Naive thymus-derived CD4-positive, alpha-beta T cell (primary cell): ENCODE measurements at regions of chr11 and their contacts with region 1.

Region 1: GRCh38 chr11:75248690-75249268 is 8.2 kb downstream of the TPBGL start:
- DNase-seq: peak; percentile 70 to 87 (median 82)
- ATAC-seq: peak; percentile 99
- H3K4me3 ChIP-seq: no peak overlapping the region
- H3K4me3 Mint-ChIP-seq: no peak overlapping the region
- H3K27ac ChIP-seq: no peak overlapping the region
- H3K27ac Mint-ChIP-seq: peak overlapping the region in 2 of 9 donors; percentile 18 to 20
- H3K4me1 ChIP-seq: no peaks in the 10 kb centered on the region
- H3K4me1 Mint-ChIP-seq: peaks cover 0 to 5% (median 4%) of the 10 kb centered on the region in 7 donors
- H3K27me3 ChIP-seq: no peaks in the 10 kb centered on the region
- H3K27me3 Mint-ChIP-seq: peaks cover 0 to 37% (median 10%) of the 10 kb centered on the region in 5 donors

Region 2: GRCh38 chr11:74702383-74703007 is 546.3 kb before region 1 on chr11:
- CTCF ChIA-PET with region 1: interaction called, 3 read pairs
- POLR2A ChIA-PET with region 1: no interaction called
- intact Hi-C with region 1: loop called in 1 of 2 experiments (anchors 1 kb)
- DNase-seq: peak; percentile 4 to 52 (median 41)
- ATAC-seq: peak; percentile 78
- H3K4me3 ChIP-seq: no peak overlapping the region
- H3K4me3 Mint-ChIP-seq: no peak overlapping the region
- H3K27ac ChIP-seq: no peak overlapping the region
- H3K27ac Mint-ChIP-seq: peak overlapping the region in 1 of 9 donors; percentile 22
- H3K4me1 ChIP-seq: no peaks in the 10 kb centered on the region
- H3K4me1 Mint-ChIP-seq: peaks cover 0 to 8% (median 0%) of the 10 kb centered on the region in 7 donors
- H3K27me3 ChIP-seq: no peaks in the 10 kb centered on the region
- H3K27me3 Mint-ChIP-seq: peaks cover 0 to 2% (median 2%) of the 10 kb centered on the region in 5 donors

Region 3: GRCh38 chr11:74929431-74930363 is 319.1 kb before region 1 on chr11:
- CTCF ChIA-PET with region 1: interaction called, 13 read pairs
- POLR2A ChIA-PET with region 1: no interaction called
- intact Hi-C with region 1: loop called (anchors 1 kb)
- DNase-seq: peak; percentile 9 to 74 (median 59)
- ATAC-seq: peak; percentile 92
- H3K4me3 ChIP-seq: no peak overlapping the region
- H3K4me3 Mint-ChIP-seq: no peak overlapping the region
- H3K27ac ChIP-seq: no peak overlapping the region
- H3K27ac Mint-ChIP-seq: no peak overlapping the region
- H3K4me1 ChIP-seq: no peaks in the 10 kb centered on the region
- H3K4me1 Mint-ChIP-seq: peaks cover 0 to 36% (median 0%) of the 10 kb centered on the region in 7 donors
- H3K27me3 ChIP-seq: no peaks in the 10 kb centered on the region
- H3K27me3 Mint-ChIP-seq: no peaks in the 10 kb centered on the region

Region 4: GRCh38 chr11:75022759-75023396 is 225.9 kb before region 1 on chr11:
- CTCF ChIA-PET with region 1: interaction called, 45 read pairs
- POLR2A ChIA-PET with region 1: no interaction called
- intact Hi-C with region 1: loop called (anchors 1 kb)
- DNase-seq: peak; percentile 38 to 71 (median 66)
- ATAC-seq: peak; percentile 88
- H3K4me3 ChIP-seq: no peak overlapping the region
- H3K4me3 Mint-ChIP-seq: no peak overlapping the region
- H3K27ac ChIP-seq: no peak overlapping the region
- H3K27ac Mint-ChIP-seq: no peak overlapping the region
- H3K4me1 ChIP-seq: no peaks in the 10 kb centered on the region
- H3K4me1 Mint-ChIP-seq: no peaks in the 10 kb centered on the region
- H3K27me3 ChIP-seq: no peaks in the 10 kb centered on the region
- H3K27me3 Mint-ChIP-seq: no peaks in the 10 kb centered on the region

Region 5: DNA sequence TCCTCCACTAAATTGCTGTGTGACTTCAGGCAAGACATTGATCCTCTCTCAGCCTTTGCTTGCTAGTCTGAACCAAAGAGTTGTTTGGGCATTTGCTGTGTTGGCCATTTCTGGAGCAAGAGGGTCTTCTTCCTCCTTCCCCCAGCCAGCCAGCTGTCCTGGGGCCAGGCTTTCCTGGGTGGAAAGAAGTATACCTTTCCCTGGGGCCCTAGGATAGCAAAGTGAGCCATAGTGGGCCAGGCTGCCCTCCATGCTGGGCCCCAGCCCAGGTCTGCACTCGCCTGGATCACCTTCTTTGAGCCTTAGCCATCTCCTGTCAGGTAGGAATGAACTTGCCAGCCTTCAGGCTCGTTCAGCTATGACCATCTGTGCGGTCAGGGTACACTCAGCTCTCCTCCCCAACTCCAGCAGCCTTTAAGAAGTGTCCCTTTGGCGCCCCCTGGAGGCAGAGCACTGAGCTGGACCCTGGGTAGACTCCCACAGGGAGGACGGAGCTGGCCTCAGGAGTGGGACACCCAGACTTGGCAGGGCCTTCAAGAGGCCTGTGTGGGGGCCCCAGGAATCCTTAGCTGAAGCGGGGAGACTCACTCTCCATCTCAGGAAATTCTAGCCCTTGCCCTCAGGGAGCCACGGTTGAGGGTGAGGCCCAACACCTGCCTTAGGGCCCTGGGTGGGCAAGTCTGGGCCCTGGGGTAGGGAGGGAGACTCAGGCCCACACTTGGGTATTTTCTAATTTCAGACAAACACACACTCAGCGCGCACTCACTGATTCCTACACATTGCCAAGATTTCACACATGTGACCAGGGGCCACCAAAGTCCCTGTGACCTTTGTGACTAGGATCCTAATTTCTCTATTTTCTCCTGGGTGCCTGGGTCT is 43.9 kb before region 1 on chr11:
- CTCF ChIA-PET with region 1: interaction called, 9 read pairs
- POLR2A ChIA-PET with region 1: no interaction called
- intact Hi-C with region 1: loop called in 1 of 2 experiments (anchors 2 kb)
- DNase-seq: peak; percentile 53 to 86 (median 64)
- ATAC-seq: peak; percentile 92
- H3K4me3 ChIP-seq: no peak overlapping the region
- H3K4me3 Mint-ChIP-seq: no peak overlapping the region
- H3K27ac ChIP-seq: no peak overlapping the region
- H3K27ac Mint-ChIP-seq: no peak overlapping the region
- H3K4me1 ChIP-seq: no peaks in the 10 kb centered on the region
- H3K4me1 Mint-ChIP-seq: peaks cover 0 to 2% (median 0%) of the 10 kb centered on the region in 7 donors
- H3K27me3 ChIP-seq: peaks cover 0 to 2% of the 10 kb centered on the region in 2 donors
- H3K27me3 Mint-ChIP-seq: peaks cover 0 to 9% (median 6%) of the 10 kb centered on the region in 5 donors

Region 6: GRCh38 chr11:75263944-75264349 is 15.2 kb after region 1 on chr11:
- CTCF ChIA-PET with region 1: interaction called, 45 read pairs
- POLR2A ChIA-PET with region 1: interaction called, 4 read pairs
- intact Hi-C with region 1: no loop called
- DNase-seq: no peak
- ATAC-seq: peak; percentile 35
- H3K4me3 ChIP-seq: no peak overlapping the region
- H3K4me3 Mint-ChIP-seq: peak overlapping the region in 6 of 10 donors; percentile 9 to 55 (median 20)
- H3K27ac ChIP-seq: peak overlapping the region; percentile 33
- H3K27ac Mint-ChIP-seq: peak overlapping the region; percentile 18 to 87 (median 59)
- H3K4me1 ChIP-seq: peaks cover 19 to 41% of the 10 kb centered on the region in 2 donors
- H3K4me1 Mint-ChIP-seq: peaks cover 26 to 62% (median 52%) of the 10 kb centered on the region in 7 donors
- H3K27me3 ChIP-seq: no peaks in the 10 kb centered on the region
- H3K27me3 Mint-ChIP-seq: peaks cover 0 to 2% (median 0%) of the 10 kb centered on the region in 5 donors

Region 7: DNA sequence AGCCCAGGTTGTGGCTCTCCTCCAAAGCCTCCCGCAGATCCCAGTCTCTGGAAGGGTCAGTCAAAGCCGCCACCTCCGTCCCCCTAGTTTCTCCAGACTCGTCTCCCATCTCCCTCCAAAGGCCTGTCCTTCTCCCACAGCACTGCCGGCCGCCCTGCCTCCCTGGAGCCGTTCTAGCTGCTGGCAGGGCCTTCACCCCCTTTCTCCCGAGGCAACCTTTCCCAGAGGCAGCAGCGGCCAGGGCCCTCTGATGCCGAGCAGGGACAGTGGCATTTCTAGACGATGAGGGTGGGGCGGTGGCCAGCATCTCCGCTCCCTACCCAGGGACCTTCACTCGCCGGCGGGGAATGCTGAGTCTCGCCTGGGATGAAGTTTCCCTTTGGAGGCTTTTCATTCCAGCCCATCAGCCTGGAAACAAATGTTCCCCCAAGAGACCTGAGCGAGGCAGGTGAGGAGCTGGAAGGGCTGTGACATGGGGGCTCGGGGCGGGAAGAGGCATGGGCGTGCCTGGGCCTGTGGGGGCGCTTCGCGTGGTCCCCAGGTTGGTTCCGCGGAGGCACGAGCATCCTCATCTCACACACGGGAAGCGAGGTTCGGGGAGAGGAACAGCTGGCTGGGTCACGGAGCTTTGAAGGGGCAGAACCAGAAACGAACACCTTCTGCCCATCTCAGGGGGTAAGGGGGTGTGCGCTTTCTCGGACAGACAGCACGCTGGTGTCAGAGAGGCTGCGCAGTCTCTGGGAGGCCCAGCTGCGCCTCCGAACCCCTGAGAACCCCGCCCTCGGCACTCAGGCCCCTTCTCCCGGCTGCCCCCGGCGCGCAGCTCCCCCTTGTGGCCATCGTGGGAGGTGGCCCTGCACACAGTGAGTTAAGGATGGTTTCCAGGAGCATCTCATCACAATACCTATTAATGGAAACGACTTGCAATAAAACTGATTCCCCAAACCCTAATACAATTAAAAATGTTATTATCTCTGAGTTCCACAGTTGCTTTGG is 202.3 kb after region 1 on chr11:
- CTCF ChIA-PET with region 1: no interaction called
- POLR2A ChIA-PET with region 1: no interaction called
- intact Hi-C with region 1: no loop called
- DNase-seq: peak in 1 of 9 donors; percentile 56
- ATAC-seq: peak; percentile 40
- H3K4me3 ChIP-seq: no peak overlapping the region
- H3K4me3 Mint-ChIP-seq: no peak overlapping the region
- H3K27ac ChIP-seq: no peak overlapping the region
- H3K27ac Mint-ChIP-seq: no peak overlapping the region
- H3K4me1 ChIP-seq: no peaks in the 10 kb centered on the region
- H3K4me1 Mint-ChIP-seq: no peaks in the 10 kb centered on the region
- H3K27me3 ChIP-seq: no peaks in the 10 kb centered on the region
- H3K27me3 Mint-ChIP-seq: no peaks in the 10 kb centered on the region